CD4-positive, alpha-beta memory T cell (primary cell): ENCODE measurements at regions of chr12 and their contacts with region 1.

Region 1: GRCh38 chr12:54379401-54380201 is 4.9 kb downstream of the ZNF385A start:
- DNase-seq: peak; percentile 83 to 86 (median 84)
- H3K4me3 ChIP-seq: peak overlapping the region in 1 of 2 donors; percentile 38
- H3K4me3 Mint-ChIP-seq: peak overlapping the region; percentile 31 to 75 (median 62)
- H3K27ac ChIP-seq: no peak overlapping the region
- H3K27ac Mint-ChIP-seq: peak overlapping the region in 3 of 7 donors; percentile 24 to 44 (median 41)
- H3K4me1 ChIP-seq: peaks cover 4% of the 10 kb centered on the region
- H3K4me1 Mint-ChIP-seq: peaks cover 3 to 7% (median 5%) of the 10 kb centered on the region in 4 donors
- H3K27me3 ChIP-seq: no peaks in the 10 kb centered on the region
- H3K27me3 Mint-ChIP-seq: no peaks in the 10 kb centered on the region

Region 2: GRCh38 chr12:54214553-54215406 is 164.8 kb before region 1 on chr12:
- CTCF ChIA-PET with region 1: interaction called, 18 read pairs
- POLR2A ChIA-PET with region 1: no interaction called
- intact Hi-C with region 1: no loop called
- DNase-seq: peak; percentile 88 to 90 (median 88)
- H3K4me3 ChIP-seq: peak overlapping the region in 1 of 2 donors; percentile 70
- H3K4me3 Mint-ChIP-seq: peak overlapping the region; percentile 63 to 85 (median 83)
- H3K27ac ChIP-seq: no peak overlapping the region
- H3K27ac Mint-ChIP-seq: peak overlapping the region in 3 of 7 donors; percentile 12 to 90 (median 64)
- H3K4me1 ChIP-seq: peaks cover 37% of the 10 kb centered on the region
- H3K4me1 Mint-ChIP-seq: peaks cover 17 to 48% (median 27%) of the 10 kb centered on the region in 4 donors
- H3K27me3 ChIP-seq: no peaks in the 10 kb centered on the region
- H3K27me3 Mint-ChIP-seq: peaks cover 2 to 3% of the 10 kb centered on the region in 2 donors

Region 3: DNA sequence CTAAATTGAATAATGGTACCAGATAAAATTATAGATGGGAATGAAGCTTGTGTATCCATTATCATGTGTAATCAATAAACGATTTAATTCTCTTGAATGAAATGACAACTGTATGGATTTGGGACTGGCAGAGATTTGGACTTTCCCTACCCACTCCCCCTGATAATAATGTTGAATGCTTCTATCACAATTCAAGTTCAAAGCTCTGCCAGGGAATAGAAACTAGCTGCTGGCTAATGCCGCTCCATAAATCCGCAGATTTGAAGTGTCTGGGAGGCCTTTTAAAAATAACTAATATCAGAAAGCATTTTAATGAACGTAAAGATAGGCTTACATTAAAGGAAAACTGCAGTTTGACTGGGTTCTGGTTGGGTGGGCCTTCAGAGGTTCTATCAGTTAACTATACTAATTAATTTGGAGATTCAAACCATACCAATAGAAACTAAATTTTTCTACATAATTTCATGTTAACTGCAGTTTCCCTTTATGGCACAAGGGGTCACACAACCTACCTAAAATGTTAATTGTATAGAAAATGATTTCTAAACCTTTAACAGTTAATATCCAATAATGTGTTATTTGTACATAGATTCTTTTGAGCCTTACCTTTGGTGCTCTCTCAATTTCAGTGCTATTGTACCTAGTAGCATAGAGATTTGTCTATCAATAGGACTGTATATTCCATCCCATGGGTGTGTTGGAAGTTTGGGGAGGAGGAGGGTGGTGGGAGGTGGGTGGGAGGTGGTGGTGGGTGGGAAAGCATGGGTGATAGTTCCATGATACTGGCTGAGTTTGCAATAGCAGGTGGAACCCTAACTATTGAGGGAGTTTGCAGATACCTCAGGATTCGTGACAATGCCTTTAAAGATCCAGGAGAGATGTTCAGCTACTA is 94.2 kb before region 1 on chr12:
- CTCF ChIA-PET with region 1: interaction called, 53 read pairs
- POLR2A ChIA-PET with region 1: interaction called, 4 read pairs
- intact Hi-C with region 1: no loop called
- DNase-seq: no peak
- H3K4me3 ChIP-seq: no peak overlapping the region
- H3K4me3 Mint-ChIP-seq: peak overlapping the region in 6 of 8 donors; percentile 29 to 63 (median 50)
- H3K27ac ChIP-seq: no peak overlapping the region
- H3K27ac Mint-ChIP-seq: peak overlapping the region in 6 of 7 donors; percentile 9 to 92 (median 64)
- H3K4me1 ChIP-seq: peaks cover 53% of the 10 kb centered on the region
- H3K4me1 Mint-ChIP-seq: peaks cover 0 to 37% (median 22%) of the 10 kb centered on the region in 4 donors
- H3K27me3 ChIP-seq: no peaks in the 10 kb centered on the region
- H3K27me3 Mint-ChIP-seq: no peaks in the 10 kb centered on the region

Region 4: GRCh38 chr12:54337280-54337842 is 42.2 kb before region 1 on chr12:
- CTCF ChIA-PET with region 1: interaction called, 28 read pairs
- POLR2A ChIA-PET with region 1: no interaction called
- intact Hi-C with region 1: no loop called
- DNase-seq: no peak
- H3K4me3 ChIP-seq: no peak overlapping the region
- H3K4me3 Mint-ChIP-seq: no peak overlapping the region
- H3K27ac ChIP-seq: no peak overlapping the region
- H3K27ac Mint-ChIP-seq: peak overlapping the region in 3 of 7 donors; percentile 48 to 51 (median 48)
- H3K4me1 ChIP-seq: peaks cover 4% of the 10 kb centered on the region
- H3K4me1 Mint-ChIP-seq: peaks cover 6 to 29% (median 15%) of the 10 kb centered on the region in 4 donors
- H3K27me3 ChIP-seq: no peaks in the 10 kb centered on the region
- H3K27me3 Mint-ChIP-seq: no peaks in the 10 kb centered on the region

Region 5: DNA sequence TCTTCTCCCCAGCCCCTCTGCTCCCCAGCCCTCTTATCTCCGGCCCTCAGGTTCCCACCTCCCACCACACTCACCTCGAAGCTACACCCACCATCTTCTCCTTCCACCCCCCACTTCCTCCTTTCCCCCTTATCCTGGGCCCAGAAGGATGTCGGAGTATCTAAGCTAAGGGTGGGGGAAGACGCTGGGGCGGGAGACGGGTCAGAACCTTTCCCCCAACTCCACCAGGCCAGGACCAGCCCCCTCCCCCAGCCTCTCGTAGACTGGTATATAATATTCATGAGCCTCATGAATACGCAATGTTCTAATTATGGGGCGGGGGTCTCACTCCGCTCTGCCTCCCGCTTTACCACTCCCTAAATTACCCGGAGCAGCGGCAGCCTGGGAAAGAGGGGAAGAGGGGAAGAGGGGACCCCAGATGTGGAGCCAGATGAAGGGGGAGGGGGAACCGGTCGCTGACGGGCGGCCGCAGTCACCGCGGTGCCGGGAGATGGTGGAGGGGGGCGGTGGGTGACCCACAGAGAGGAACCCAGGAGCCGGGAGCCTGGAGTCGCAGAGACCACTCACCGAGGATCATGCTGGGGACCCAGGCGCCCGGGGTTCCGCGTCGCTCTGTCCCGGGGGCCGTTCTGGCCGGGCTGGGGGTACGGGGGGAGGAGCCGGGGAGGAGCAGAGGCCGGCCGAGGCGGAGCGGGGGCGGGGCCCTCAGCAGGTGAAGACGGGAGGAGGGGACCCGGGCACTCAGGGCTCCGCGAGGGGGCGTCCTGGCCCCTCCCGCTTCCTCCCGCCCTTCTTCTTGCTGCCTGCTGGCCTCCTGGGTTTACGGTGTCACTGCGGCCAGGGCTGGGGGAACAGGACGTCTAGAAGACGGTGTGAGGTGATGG is 11.3 kb after region 1 on chr12:
- CTCF ChIA-PET with region 1: interaction called, 108 read pairs
- POLR2A ChIA-PET with region 1: no interaction called
- intact Hi-C with region 1: no loop called
- DNase-seq: peak; percentile 64 to 77 (median 67)
- H3K4me3 ChIP-seq: peak overlapping the region; percentile 15 to 28
- H3K4me3 Mint-ChIP-seq: peak overlapping the region; percentile 64 to 89 (median 80)
- H3K27ac ChIP-seq: no peak overlapping the region
- H3K27ac Mint-ChIP-seq: peak overlapping the region in 1 of 7 donors; percentile 25
- H3K4me1 ChIP-seq: peaks cover 39% of the 10 kb centered on the region
- H3K4me1 Mint-ChIP-seq: peaks cover 24 to 51% (median 29%) of the 10 kb centered on the region in 4 donors
- H3K27me3 ChIP-seq: no peaks in the 10 kb centered on the region
- H3K27me3 Mint-ChIP-seq: no peaks in the 10 kb centered on the region

Region 6: GRCh38 chr12:54419088-54419892 is 39.7 kb after region 1 on chr12 and contains the start of gene ITGA5:
- CTCF ChIA-PET with region 1: interaction called, 15 read pairs
- POLR2A ChIA-PET with region 1: no interaction called
- intact Hi-C with region 1: no loop called
- DNase-seq: peak in 3 of 5 donors; percentile 23 to 57 (median 27)
- H3K4me3 ChIP-seq: peak within 1 kb of the TSS; percentile 55 to 81
- H3K4me3 Mint-ChIP-seq: peak within 1 kb of the TSS; percentile 96 to 98 (median 98)
- H3K27ac ChIP-seq: peak within 1 kb of the TSS; percentile 91
- H3K27ac Mint-ChIP-seq: peak within 1 kb of the TSS; percentile 90 to 99 (median 98)
- H3K4me1 ChIP-seq: peaks cover 46% of the 10 kb centered on the region
- H3K4me1 Mint-ChIP-seq: peaks cover 34 to 73% (median 39%) of the 10 kb centered on the region in 4 donors
- H3K27me3 ChIP-seq: no peaks in the 10 kb centered on the region
- H3K27me3 Mint-ChIP-seq: peaks cover 0 to 1% of the 10 kb centered on the region in 2 donors
- total RNA-seq, gene ITGA5: 158 to 162 TPM